ENCODE measurements at regions of chr20 and their contacts with region 1.

Region 1: GRCh38 chr20:49982346-49983122 is at the start of gene SNAI1:
- DNase-seq: peak; percentile 89
- H3K4me3 Mint-ChIP-seq: peak within 1 kb of the TSS; percentile 63
- H3K27ac Mint-ChIP-seq: peak within 1 kb of the TSS; percentile 45
- H3K4me1 Mint-ChIP-seq: peaks cover 33% of the 10 kb centered on the region
- H3K27me3 Mint-ChIP-seq: peaks cover 29% of the 10 kb centered on the region
- CTCF ChIP-seq: peak; percentile 80
- total RNA-seq, gene SNAI1: 0.81 and 0.90 TPM in 2 replicates

Region 2: GRCh38 chr20:49936153-49937027 is 46.1 kb before region 1 on chr20 and contains the start of gene RNF114:
- CTCF ChIA-PET with region 1: no interaction called
- intact Hi-C with region 1: no loop called
- DNase-seq: peak; percentile 96
- H3K4me3 Mint-ChIP-seq: peak within 1 kb of the TSS; percentile 96
- H3K27ac Mint-ChIP-seq: peak within 1 kb of the TSS; percentile 65
- H3K4me1 Mint-ChIP-seq: peaks cover 31% of the 10 kb centered on the region
- H3K27me3 Mint-ChIP-seq: no peaks in the 10 kb centered on the region
- CTCF ChIP-seq: no peak
- total RNA-seq, gene RNF114: 72.3 and 93.9 TPM in 2 replicates

Region 3: DNA sequence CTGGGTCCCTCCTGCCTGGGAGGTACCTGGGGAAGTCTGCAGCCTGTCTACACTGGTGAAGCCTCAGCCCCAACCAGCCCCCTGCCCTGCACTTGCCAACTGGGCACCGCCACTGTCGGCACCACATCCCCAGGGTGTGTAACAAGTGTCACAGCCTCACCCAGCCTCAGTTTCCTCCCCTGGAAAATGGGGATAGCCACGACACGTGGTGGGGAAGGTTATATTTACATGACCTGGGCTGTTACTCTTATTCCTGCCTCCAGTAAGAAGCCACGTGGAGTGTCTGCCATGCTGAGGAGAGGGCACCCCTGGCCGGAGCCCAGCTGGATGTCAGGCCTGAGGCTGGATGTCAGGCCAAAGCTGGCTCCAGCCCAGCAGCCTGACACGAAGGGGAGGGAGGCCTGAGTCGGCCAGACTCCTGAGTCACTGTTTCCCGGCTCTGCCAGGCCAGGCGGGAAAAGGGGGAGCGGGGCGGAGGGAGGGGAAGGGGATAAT is 45.1 kb after region 1 on chr20:
- CTCF ChIA-PET with region 1: no interaction called
- intact Hi-C with region 1: no loop called
- DNase-seq: peak; percentile 59
- H3K4me3 Mint-ChIP-seq: no peak overlapping the region
- H3K27ac Mint-ChIP-seq: no peak overlapping the region
- H3K4me1 Mint-ChIP-seq: peaks cover 54% of the 10 kb centered on the region
- H3K27me3 Mint-ChIP-seq: no peaks in the 10 kb centered on the region
- CTCF ChIP-seq: no peak

Region 4: DNA sequence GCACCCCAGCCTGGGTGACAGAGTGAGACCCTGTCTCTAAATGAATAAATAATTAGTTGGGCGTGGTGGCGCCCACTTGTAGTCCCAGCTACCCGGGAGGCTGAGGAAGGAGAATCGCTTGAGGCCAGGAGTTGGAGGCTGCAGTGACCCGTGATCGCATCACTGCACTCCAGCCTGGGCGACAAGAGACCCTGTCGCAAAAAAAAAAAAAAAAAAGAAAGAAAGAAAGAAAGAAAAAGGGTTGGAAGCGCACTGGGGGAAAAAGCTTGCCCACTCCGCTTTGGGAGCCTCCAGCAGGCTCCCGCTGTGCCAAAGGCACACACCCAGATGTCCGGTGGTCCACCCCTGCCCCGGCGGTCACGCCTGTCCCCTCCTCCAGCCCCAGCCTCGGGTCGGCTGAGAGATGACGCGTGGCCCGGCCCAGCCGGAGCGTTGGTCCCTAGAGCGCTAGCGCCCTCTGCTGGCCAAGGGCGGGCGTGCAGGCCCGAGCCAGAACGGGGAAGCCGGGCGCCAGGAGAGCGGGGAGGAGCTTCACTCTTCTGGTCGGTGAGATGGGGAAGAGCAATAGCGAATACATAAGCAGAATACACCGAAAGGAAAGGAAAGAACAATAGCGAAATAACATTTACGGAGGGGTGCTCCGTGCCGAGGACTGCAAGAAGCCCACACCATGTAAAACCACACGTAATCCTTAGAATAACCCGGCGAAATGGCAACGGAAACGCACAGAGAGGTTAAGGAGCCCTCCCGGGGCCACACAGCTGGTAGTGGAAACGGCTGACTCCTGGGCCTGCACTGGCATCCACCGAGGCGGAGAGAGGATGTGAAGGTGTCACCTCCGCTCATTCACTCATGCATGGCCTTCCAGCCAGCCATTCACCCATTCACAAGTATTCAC is 88.7 kb after region 1 on chr20:
- CTCF ChIA-PET with region 1: interaction called, 134 read pairs
- intact Hi-C with region 1: loop called (anchors 1 kb)
- DNase-seq: peak; percentile 99
- H3K4me3 Mint-ChIP-seq: peak overlapping the region; percentile 70
- H3K27ac Mint-ChIP-seq: no peak overlapping the region
- H3K4me1 Mint-ChIP-seq: peaks cover 9% of the 10 kb centered on the region
- H3K27me3 Mint-ChIP-seq: peaks cover 28% of the 10 kb centered on the region
- CTCF ChIP-seq: peak; percentile 100

Region 5: GRCh38 chr20:50085452-50086365 is 103.2 kb after region 1 on chr20:
- CTCF ChIA-PET with region 1: interaction called, 13 read pairs
- intact Hi-C with region 1: no loop called
- DNase-seq: peak; percentile 52
- H3K4me3 Mint-ChIP-seq: peak overlapping the region; percentile 8
- H3K27ac Mint-ChIP-seq: peak overlapping the region; percentile 16
- H3K4me1 Mint-ChIP-seq: peaks cover 16% of the 10 kb centered on the region
- H3K27me3 Mint-ChIP-seq: no peaks in the 10 kb centered on the region
- CTCF ChIP-seq: peak; percentile 85

Region 6: DNA sequence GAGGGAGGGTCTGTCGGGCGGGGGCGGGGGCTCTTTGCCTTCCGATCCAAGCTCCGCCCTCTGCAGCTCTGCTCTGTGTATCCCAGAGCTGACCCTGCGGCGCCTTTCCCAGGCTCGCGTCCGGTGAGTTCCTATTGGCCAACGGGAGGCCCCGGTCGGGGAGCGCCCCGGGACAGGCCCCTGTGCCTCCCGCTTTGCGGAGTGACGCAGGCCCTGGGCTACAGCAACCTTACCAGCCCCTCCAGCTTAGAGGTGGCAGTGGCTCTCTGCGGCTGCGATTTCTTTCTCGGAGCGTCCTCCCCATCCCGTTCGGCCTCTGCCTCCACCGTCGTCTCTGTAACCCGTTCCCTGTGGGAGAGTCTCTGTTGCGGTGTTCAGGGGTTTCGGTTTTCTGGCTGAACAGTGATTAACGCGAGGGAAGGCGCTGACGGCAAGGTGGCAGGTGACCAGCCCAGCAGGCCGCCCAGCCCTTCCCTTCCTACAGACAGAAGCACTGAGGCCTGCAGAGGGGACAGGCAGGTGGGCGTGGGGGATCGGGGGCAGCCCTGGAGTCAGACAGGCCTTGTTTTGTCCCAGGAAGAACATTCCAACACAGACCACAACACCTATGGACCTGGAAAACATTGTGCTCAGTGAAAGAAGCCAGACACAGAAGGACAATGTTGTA is 189.9 kb after region 1 on chr20:
- CTCF ChIA-PET with region 1: interaction called, 8 read pairs
- intact Hi-C with region 1: loop called (anchors 2 kb)
- DNase-seq: peak; percentile 90
- H3K4me3 Mint-ChIP-seq: peak overlapping the region; percentile 58
- H3K27ac Mint-ChIP-seq: peak overlapping the region; percentile 28
- H3K4me1 Mint-ChIP-seq: peaks cover 18% of the 10 kb centered on the region
- H3K27me3 Mint-ChIP-seq: no peaks in the 10 kb centered on the region
- CTCF ChIP-seq: no peak

Measured in Calu3 (cell line).